ENCODE measurements at regions of chr7 and their contacts with region 1.

Region 1: GRCh38 chr7:139620676-139621344 is 97.3 kb downstream of the CLEC2L start:
- DNase-seq: peak; percentile 61 to 82
- H3K4me3 ChIP-seq: no peak overlapping the region
- H3K4me3 Mint-ChIP-seq: no peak overlapping the region
- H3K27ac Mint-ChIP-seq: no peak overlapping the region
- H3K4me1 ChIP-seq: no peaks in the 10 kb centered on the region
- H3K4me1 Mint-ChIP-seq: peaks cover 4% of the 10 kb centered on the region
- H3K27me3 ChIP-seq: no peaks in the 10 kb centered on the region
- H3K27me3 Mint-ChIP-seq: no peaks in the 10 kb centered on the region
- CTCF ChIP-seq: peak; percentile 80 to 86

Region 2: DNA sequence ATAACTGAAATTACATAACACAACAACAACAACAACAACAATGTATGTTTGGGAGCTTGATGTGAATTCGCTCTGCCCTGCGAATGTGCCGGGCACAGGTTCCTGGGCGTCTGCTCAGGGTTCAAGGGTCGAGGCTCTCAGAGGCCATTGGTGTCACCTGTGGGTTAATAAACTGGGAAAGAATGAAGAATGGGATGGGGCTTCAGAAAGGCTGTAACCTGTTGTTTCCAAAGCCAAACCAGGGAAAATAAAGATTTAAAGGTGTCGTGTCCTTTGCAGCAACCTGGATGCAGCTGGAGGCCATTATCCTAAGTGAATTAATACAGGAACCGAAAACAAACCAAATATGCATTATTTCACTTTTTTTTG is 120.1 kb before region 1 on chr7:
- CTCF ChIA-PET with region 1: interaction called, 7 read pairs
- POLR2A ChIA-PET with region 1: no interaction called
- intact Hi-C with region 1: loop called (anchors 1 kb)
- DNase-seq: no peak
- H3K4me3 ChIP-seq: no peak overlapping the region
- H3K4me3 Mint-ChIP-seq: peak overlapping the region; percentile 72
- H3K27ac Mint-ChIP-seq: no peak overlapping the region
- H3K4me1 ChIP-seq: no peaks in the 10 kb centered on the region; the same call in 1 of the 2 replicates
- H3K4me1 Mint-ChIP-seq: peaks cover 7% of the 10 kb centered on the region
- H3K27me3 ChIP-seq: no peaks in the 10 kb centered on the region
- H3K27me3 Mint-ChIP-seq: no peaks in the 10 kb centered on the region
- CTCF ChIP-seq: no peak

Region 3: GRCh38 chr7:139602143-139602722 is 18.6 kb before region 1 on chr7:
- CTCF ChIA-PET with region 1: interaction called, 17 read pairs
- POLR2A ChIA-PET with region 1: no interaction called
- intact Hi-C with region 1: no loop called
- DNase-seq: peak in 1 of 2 experiments; percentile 25
- H3K4me3 ChIP-seq: no peak overlapping the region
- H3K4me3 Mint-ChIP-seq: no peak overlapping the region
- H3K27ac Mint-ChIP-seq: no peak overlapping the region
- H3K4me1 ChIP-seq: no peaks in the 10 kb centered on the region
- H3K4me1 Mint-ChIP-seq: no peaks in the 10 kb centered on the region
- H3K27me3 ChIP-seq: no peaks in the 10 kb centered on the region
- H3K27me3 Mint-ChIP-seq: no peaks in the 10 kb centered on the region
- CTCF ChIP-seq: peak; percentile 44 to 62

Region 4: DNA sequence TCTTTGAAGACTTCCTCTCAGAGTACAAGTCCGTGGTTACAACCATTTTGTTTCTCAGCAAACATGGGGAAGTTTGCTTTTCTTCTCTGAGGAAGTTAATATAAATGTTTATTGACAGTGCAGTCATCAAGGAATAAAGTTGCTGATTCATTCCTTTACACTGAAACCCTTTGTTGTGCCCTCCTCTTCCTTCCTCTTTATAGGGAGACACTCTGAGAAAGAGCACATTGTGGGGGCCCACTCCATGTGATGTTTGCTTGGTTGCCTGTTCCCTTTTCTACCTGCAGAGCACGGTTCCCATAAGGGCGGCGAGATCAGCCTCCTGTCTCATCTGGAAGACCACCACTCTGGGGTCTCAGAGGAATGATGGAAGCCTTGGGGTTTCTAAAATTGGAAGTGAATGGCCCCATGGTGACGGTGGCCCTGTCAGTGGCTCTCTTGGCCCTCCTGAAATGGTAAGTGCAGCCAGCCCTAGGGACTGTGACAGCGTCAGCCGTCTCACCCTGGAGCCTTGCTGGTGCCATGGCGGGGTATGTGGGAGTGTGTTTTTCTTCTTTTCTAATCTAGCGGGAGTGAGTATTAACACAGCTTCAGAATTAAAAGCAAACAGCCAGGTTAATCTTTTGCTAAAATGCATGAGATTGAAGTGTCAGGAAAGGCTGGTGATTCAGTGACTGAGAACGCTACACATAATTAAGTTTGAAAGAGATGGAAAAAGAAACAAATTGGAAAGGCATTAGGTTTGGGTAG is 208.4 kb after region 1 on chr7 and contains the start of gene TBXAS1:
- CTCF ChIA-PET with region 1: interaction called, 3 read pairs
- POLR2A ChIA-PET with region 1: no interaction called
- intact Hi-C with region 1: loop called (anchors 1 kb)
- DNase-seq: peak in 1 of 2 experiments; percentile 19
- H3K4me3 ChIP-seq: no peak within 1 kb of the TSS
- H3K4me3 Mint-ChIP-seq: no peak within 1 kb of the TSS
- H3K27ac Mint-ChIP-seq: no peak within 1 kb of the TSS
- H3K4me1 ChIP-seq: no peaks in the 10 kb centered on the region; the same call in 1 of the 2 replicates
- H3K4me1 Mint-ChIP-seq: peaks cover 8% of the 10 kb centered on the region
- H3K27me3 ChIP-seq: no peaks in the 10 kb centered on the region
- H3K27me3 Mint-ChIP-seq: peaks cover 5% of the 10 kb centered on the region
- CTCF ChIP-seq: no peak
- total RNA-seq, gene TBXAS1: 1.2 and 1.6 TPM in 2 replicates

Measured in Caco-2 (cell line).